BJ (cell line): ENCODE measurements at regions of chr3 and their contacts with region 1.

Region 1: GRCh38 chr3:98022978-98023820 is 11.9 kb downstream of the GABRR3 start:
- DNase-seq: no peak
- H3K4me3 ChIP-seq: no peak overlapping the region
- H3K27me3 ChIP-seq: no peaks in the 10 kb centered on the region
- CTCF ChIP-seq: peak; percentile 92

Region 2: DNA sequence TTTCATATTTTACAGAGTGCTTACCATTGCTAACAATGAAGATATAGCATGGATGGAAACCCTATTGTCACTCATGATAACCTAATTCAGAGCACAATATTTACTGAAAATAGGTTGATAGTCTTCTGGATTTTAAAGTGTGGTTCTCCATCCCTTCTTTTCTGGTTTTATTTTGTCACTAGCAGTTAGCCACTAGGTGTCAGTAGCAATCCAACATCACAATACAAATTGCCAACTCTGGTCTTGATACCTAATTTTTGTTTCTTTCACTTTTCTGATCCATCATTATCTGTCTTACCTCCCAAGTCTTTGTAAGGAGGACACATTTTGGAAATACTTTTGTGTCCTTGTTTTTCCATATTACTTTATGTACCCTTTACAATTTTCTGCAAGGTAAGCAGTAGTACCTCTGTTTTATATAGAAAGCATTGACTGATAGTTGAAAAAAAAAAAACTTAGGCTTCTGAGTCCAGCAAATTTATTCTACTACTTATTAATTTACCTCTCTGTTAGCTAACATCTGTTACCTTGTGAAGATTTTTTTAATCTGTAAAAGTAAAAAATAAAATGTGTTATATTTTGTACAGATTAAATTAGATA is 229.7 kb before region 1 on chr3:
- CTCF ChIA-PET with region 1: interaction called, 78 read pairs
- POLR2A ChIA-PET with region 1: no interaction called
- DNase-seq: peak; percentile 6
- H3K4me3 ChIP-seq: no peak overlapping the region
- H3K27me3 ChIP-seq: no peaks in the 10 kb centered on the region
- CTCF ChIP-seq: peak; percentile 72

Region 3: GRCh38 chr3:97804471-97804870 is 218.7 kb before region 1 on chr3:
- CTCF ChIA-PET with region 1: interaction called, 18 read pairs
- POLR2A ChIA-PET with region 1: no interaction called
- DNase-seq: no peak
- H3K4me3 ChIP-seq: no peak overlapping the region
- H3K27me3 ChIP-seq: no peaks in the 10 kb centered on the region
- CTCF ChIP-seq: no peak

Region 4: DNA sequence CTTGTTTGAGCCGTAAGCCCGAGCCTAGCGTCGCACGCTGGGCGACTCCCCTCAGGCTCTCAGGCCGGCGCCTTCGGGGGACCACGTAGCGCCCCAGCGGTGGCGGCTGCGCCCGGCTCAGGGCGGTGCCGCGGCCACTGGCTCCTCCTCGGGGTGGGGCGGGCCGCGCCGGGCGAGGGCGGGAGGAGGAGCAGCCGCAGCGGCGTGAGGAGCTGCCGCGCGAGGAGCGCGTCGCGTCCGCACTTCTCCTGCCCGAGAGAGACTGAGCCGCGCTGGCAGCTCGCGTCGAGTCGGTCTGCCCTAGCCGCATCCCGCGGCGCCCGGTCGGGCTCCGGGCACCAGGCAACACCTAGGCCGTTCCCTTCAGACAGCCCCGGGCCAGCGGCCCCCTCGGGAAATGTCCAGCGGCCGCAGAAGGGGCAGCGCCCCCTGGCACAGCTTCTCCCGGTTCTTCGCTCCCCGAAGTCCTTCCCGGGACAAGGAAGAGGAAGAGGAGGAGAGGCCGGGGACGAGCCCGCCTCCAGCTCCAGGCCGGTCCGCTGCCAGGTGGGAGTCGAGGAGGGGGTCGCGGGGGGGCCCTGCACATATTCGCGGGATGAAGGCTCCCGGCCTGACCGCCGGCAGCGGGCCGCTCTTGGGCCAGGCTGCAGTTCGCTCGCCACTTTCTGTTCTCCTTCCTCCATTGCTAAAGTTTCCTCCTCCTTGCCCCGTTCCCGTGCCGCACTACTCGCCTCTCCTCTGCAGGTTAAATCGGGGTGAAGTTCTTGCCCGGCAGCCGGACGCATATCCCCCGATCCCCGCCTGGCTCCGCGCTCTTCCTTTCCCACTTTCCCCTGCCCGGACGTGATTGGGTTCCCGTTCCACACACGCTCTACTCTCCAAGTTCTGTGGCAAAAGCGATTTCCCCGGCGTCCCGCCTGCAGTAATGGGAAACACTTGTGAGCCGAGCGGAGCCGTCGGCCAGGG is 201.1 kb before region 1 on chr3 and contains the start of gene CRYBG3:
- CTCF ChIA-PET with region 1: interaction called, 25 read pairs
- POLR2A ChIA-PET with region 1: no interaction called
- DNase-seq: peak; percentile 13
- H3K4me3 ChIP-seq: peak within 1 kb of the TSS; percentile 84
- H3K27me3 ChIP-seq: no peaks in the 10 kb centered on the region
- CTCF ChIP-seq: peak; percentile 56
- polyA plus RNA-seq, gene CRYBG3: 4.1 and 6.6 TPM in 2 replicates

Region 5: DNA sequence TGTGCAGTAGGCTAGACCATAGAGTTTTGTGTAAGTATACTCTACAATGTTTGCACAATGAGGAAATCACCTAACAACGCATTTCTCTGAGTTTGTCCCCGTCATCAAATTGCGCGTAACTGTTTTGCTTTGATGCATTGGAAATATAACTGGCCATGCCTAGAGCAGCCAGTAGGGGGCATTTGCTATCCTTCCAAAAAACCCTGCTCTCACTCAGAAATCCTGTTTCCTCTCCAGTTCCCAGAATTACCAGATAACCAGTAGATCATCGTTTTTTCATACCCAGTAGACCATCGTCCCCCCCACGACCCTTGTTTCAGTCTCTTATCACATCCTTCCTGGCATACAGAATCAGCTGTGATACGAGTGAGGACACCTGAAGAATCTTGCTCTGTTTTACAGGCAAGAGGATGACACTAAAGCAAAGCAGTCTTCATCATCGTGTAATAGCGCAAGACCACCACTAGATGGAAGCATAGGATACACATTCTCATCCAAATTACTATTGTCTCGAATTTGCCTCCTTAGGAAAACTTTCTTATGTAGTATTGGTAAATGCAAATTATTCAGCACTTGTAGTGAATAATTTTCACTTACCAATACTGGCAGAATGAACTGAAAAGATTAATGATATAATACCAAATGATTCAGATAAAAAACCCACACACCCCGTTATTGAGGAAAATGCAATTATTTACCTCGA is 16.3 kb after region 1 on chr3:
- CTCF ChIA-PET with region 1: interaction called, 33 read pairs
- POLR2A ChIA-PET with region 1: no interaction called
- DNase-seq: peak; percentile 36
- H3K4me3 ChIP-seq: peak overlapping the region; percentile 29
- H3K27me3 ChIP-seq: 0 out of 2 replicates have a peak, but pooled peaks cover 3% of the 10 kb centered on the region
- CTCF ChIP-seq: peak; percentile 81

Region 6: DNA sequence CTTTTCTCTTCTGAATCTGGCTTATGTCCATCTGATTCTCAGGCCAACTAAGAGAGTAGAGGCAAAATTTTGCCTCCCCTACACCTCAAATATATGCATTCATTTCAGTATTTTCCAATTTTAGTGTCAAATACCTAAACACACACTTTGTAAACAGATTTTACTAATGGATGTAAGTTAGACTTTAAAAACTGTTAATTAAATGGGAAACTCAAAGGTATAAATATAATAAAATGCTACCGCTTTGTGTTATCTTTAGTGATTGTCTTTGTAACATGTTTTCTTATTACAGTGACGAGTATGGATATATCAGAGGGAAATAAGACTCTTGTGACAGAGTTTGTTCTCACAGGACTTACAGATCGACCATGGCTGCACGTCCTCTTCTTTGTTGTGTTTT is 63.7 kb after region 1 on chr3 and contains the start of gene OR5AC2:
- CTCF ChIA-PET with region 1: no interaction called
- POLR2A ChIA-PET with region 1: no interaction called
- DNase-seq: no peak
- H3K4me3 ChIP-seq: no peak within 1 kb of the TSS
- H3K27me3 ChIP-seq: no peaks in the 10 kb centered on the region
- CTCF ChIP-seq: no peak
- polyA plus RNA-seq, gene OR5AC2: not detected in 2 replicates

Region 7: DNA sequence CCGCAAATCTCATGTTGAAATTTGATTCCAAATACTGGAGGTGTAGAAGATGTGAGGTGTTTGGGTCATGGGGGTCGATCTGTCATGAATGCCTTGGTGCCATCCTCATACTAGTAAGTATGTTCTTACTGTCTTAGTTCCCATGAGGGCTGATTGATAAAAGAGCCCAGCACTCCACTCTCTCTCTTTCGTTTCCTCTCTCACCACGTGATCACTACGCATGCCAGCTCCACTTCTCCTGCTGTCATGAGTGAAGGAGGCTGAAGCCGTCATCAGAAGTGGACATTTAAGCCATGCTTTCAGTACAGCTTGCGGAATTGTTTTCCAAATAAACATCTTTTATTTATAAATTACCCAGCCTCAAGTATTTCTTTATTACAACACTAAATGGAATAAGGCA is 149.4 kb after region 1 on chr3:
- CTCF ChIA-PET with region 1: no interaction called
- POLR2A ChIA-PET with region 1: no interaction called
- DNase-seq: no peak
- H3K4me3 ChIP-seq: no peak overlapping the region
- H3K27me3 ChIP-seq: no peaks in the 10 kb centered on the region
- CTCF ChIP-seq: no peak